RWPE1 (cell line): ENCODE measurements at regions of chr1 and their contacts with region 1.

Region 1: GRCh38 chr1:17460245-17460644 is 20.8 kb upstream of the RCC2 start:
- DNase-seq: peak; percentile 94
- H3K27ac ChIP-seq: peak overlapping the region; percentile 97
- CTCF ChIP-seq: no peak

Region 2: GRCh38 chr1:17080880-17081279 is 379.4 kb before region 1 on chr1:
- CTCF ChIA-PET with region 1: no interaction called
- POLR2A ChIA-PET with region 1: interaction called, 10 read pairs
- DNase-seq: no peak
- H3K27ac ChIP-seq: no peak overlapping the region
- CTCF ChIP-seq: no peak

Region 3: GRCh38 chr1:17441265-17441992 is 18.8 kb before region 1 on chr1:
- CTCF ChIA-PET with region 1: interaction called, 3 read pairs
- POLR2A ChIA-PET with region 1: interaction called, 11 read pairs
- DNase-seq: peak; percentile 78
- H3K27ac ChIP-seq: peak overlapping the region; percentile 99
- CTCF ChIP-seq: no peak